HEK293 (cell line): ENCODE measurements at regions of chr1 and their contacts with region 1.

Region 1: GRCh38 chr1:229479660-229480399 is 28.3 kb downstream of the NUP133 start:
- H3K4me3 ChIP-seq: no peak overlapping the region
- H3K27ac ChIP-seq: no peak overlapping the region
- H3K4me1 ChIP-seq: no peaks in the 10 kb centered on the region
- CTCF ChIP-seq: no peak

Region 2: DNA sequence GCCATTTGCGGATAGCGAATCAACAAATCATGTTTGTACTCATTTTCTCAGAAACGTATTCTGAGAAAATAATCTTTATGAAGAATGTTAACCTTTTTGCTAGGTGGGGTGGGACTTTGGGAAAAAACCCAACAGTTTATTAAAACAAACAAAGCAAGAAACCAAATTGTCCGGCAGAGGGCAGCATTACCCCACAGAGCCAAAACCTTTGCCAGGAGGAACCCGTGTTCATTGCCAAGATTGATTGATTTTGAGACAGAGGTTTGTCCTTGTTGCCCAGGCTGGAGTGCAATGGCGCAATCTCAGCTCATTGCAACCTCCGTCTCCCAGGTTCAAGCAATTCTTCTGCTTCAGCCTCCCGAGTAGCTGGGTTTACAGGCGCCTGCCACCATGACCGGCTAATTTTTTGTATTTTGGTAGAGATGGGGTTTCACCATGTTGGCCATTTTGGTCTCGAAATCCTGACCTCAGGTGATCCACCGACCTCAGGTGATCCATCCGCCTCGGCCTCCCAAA is 815.4 kb before region 1 on chr1:
- CTCF ChIA-PET with region 1: interaction called, 11 read pairs
- POLR2A ChIA-PET with region 1: no interaction called
- H3K4me3 ChIP-seq: no peak overlapping the region
- H3K27ac ChIP-seq: no peak overlapping the region
- H3K4me1 ChIP-seq: no peaks in the 10 kb centered on the region
- CTCF ChIP-seq: peak; percentile 90

Region 3: GRCh38 chr1:229440851-229441537 is 38.8 kb before region 1 on chr1:
- CTCF ChIA-PET with region 1: interaction called, 15 read pairs
- POLR2A ChIA-PET with region 1: interaction called, 3 read pairs
- H3K4me3 ChIP-seq: no peak overlapping the region
- H3K27ac ChIP-seq: no peak overlapping the region
- H3K4me1 ChIP-seq: no peaks in the 10 kb centered on the region
- CTCF ChIP-seq: no peak

Region 4: GRCh38 chr1:229495782-229496181 is 16.0 kb after region 1 on chr1:
- CTCF ChIA-PET with region 1: interaction called, 39 read pairs
- POLR2A ChIA-PET with region 1: interaction called, 4 read pairs
- H3K4me3 ChIP-seq: no peak overlapping the region
- H3K27ac ChIP-seq: no peak overlapping the region
- H3K4me1 ChIP-seq: no peaks in the 10 kb centered on the region
- CTCF ChIP-seq: no peak

Region 5: DNA sequence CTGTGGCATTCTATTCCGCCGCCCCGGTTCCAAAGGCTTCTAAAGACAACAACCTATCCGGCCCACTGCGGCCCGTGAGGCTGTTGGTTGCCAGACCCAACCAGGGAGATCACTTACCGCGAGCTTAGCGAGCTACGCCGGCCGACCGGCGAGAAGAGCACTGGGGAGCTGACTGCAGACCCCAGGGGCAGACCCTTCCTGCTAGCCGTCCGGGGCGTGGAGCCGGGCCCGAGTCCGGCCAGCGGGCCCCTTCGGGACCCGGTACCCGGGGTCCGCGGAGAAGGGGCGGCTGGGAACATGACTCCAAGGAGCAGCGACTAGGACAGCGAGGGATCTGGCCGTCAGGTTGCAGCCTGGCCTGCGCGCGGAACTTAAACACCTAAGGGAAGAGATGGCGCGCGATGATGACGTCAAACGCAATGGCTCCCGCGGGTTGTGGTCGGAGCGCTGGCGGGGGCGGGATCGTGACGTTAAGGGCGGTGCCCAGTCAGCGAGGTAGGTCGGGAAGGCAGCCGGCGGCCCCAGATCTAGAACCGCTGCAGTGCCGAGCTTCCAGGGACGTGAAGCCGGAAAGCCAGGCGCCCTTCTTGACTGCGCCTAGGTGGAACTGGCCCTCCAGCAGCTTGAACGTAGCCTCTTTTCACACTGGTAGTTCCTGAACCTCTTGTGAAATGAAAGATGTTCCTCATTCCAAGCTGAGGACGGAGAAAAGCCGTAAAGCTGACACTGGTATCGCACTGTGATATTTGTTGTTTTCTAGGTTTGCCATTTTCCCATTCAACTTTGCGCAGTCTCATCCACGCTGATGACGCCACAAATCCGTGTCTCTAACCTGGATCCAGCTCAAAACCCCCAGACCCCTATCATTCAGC is 28.4 kb after region 1 on chr1 and contains the start of gene NUP133:
- CTCF ChIA-PET with region 1: interaction called, 13 read pairs
- POLR2A ChIA-PET with region 1: interaction called, 5 read pairs
- H3K4me3 ChIP-seq: peak within 1 kb of the TSS; percentile 96
- H3K27ac ChIP-seq: peak within 1 kb of the TSS; percentile 85
- H3K4me1 ChIP-seq: peaks cover 7% of the 10 kb centered on the region; the same call in 1 of the 2 replicates
- CTCF ChIP-seq: no peak

Region 6: GRCh38 chr1:229514578-229515275 is 34.9 kb after region 1 on chr1:
- CTCF ChIA-PET with region 1: interaction called, 10 read pairs
- POLR2A ChIA-PET with region 1: no interaction called
- H3K4me3 ChIP-seq: no peak overlapping the region
- H3K27ac ChIP-seq: no peak overlapping the region
- H3K4me1 ChIP-seq: no peaks in the 10 kb centered on the region
- CTCF ChIP-seq: peak; percentile 81